ENCODE measurements at regions of chr5 and their contacts with region 1.

Region 1: DNA sequence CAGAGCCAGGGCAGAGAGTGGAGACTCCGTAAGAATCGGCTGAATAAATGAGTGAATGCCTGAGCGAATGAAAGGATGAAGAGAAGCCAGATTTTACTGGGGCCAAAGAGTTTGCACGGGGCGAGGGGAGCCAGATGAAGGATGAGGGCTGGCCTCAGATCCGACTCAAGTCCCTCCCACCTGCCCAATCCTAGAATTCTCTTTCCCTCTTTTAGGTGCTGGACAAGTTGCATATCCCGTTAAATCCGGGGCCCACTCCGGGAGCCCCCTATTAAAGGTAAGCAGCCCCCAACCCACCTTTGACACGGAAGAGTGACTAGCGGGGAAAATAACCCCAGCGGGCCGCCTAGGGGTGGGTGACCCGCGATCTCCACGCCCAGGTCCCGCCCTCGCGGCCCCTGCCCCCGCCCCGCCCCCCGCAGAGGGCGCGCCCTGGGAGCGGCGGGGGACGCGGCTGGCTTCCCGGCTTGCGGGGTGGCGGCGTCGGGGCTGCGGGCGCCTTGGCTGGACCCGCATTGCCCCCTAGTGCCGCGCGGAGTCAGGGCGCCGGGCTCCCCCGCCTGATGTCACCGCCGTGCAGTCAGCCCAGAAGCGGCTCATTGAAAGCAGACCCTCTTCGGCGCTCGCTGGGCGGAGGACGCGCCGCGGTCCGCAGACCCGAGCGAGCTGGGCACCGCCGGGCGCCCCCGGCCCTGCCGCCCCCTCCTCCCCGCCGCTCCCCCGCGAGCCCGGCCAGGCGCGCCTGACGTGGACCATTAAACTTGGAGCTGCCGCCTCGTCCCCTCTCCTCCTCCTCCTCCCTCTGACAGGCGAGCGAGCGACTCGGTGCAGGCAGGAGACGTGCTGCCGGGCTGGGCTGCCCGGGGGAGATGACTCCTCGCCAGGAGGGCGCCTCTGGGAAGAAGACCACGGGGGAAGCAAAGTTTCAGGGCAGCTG is at the start of gene ADRA1B:
- DNase-seq: peak; percentile 37
- H3K4me3 ChIP-seq: peak within 1 kb of the TSS; percentile 24
- H3K27ac ChIP-seq: no peak within 1 kb of the TSS
- H3K4me1 ChIP-seq: no peaks in the 10 kb centered on the region
- H3K27me3 ChIP-seq: peaks cover 81% of the 10 kb centered on the region
- CTCF ChIP-seq: peak; percentile 37
- total RNA-seq, gene ADRA1B: not detected in 2 replicates

Region 2: DNA sequence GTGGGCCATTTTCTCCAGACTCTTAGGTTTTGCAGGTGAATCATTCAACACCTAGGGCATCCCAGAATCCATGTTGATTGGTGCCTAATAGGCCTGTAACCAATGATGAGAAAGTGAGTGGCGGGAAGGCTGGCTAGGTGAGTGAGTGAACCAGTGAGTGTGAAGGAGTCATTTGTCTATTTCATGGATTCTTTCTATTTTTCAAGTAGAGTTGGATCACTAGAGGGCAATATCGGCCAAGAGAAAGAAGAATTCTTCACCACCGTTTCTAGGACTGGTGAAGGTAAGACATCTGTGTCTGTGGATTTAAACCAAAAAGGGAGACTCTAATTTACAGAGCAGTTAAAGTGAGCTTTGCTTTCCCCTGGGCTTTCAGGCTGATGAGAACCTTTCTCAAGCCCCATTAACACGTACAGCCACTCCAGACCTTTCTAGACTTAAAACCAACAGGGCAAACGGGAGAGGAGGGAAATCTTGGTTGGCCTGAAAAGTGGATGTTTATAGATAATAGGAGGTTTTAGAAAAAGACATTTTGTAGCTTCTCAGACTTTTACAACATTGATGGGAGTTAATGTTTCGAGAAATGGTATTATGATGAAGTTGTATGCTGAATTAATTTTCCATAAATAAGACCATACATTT is 471.6 kb before region 1 on chr5:
- CTCF ChIA-PET with region 1: no interaction called
- POLR2A ChIA-PET with region 1: no interaction called
- intact Hi-C with region 1: loop called (anchors 10 kb)
- DNase-seq: peak; percentile 51
- H3K4me3 ChIP-seq: no peak overlapping the region
- H3K27ac ChIP-seq: no peak overlapping the region
- H3K4me1 ChIP-seq: no peaks in the 10 kb centered on the region
- H3K27me3 ChIP-seq: no peaks in the 10 kb centered on the region
- CTCF ChIP-seq: peak; percentile 40; the same call in 1 of the 2 replicates

Region 3: DNA sequence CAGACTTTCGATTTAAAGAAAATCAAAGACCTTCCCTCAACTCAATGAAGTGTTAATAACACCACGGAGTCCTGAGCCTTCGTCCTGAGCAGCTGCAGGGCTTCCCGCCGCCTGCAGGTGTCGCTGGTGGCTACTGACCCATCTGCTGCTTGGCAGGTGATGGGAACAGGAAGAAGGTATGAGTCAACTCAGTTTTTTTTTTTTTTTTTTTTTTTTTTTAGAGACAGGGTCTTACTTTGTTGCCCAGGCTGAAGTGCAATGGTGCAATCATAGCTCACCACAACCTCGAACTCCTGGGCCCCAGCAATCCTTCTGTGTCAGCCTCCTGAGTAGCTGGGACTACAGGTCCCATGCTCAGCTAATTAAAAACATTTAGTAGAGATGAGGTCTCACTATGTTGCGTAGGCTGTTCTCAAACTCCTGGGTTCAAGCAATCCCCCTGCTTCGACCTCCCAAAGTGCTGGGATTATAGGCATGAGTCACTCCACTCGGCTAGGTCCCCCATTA is 400.2 kb before region 1 on chr5:
- CTCF ChIA-PET with region 1: no interaction called
- POLR2A ChIA-PET with region 1: no interaction called
- intact Hi-C with region 1: loop called (anchors 10 kb)
- DNase-seq: peak; percentile 48
- H3K4me3 ChIP-seq: no peak overlapping the region
- H3K27ac ChIP-seq: no peak overlapping the region
- H3K4me1 ChIP-seq: no peaks in the 10 kb centered on the region
- H3K27me3 ChIP-seq: no peaks in the 10 kb centered on the region
- CTCF ChIP-seq: peak; percentile 82

Region 4: GRCh38 chr5:160287378-160288051 is 371.3 kb after region 1 on chr5:
- CTCF ChIA-PET with region 1: no interaction called
- POLR2A ChIA-PET with region 1: no interaction called
- intact Hi-C with region 1: no loop called
- DNase-seq: no peak
- H3K4me3 ChIP-seq: no peak overlapping the region
- H3K27ac ChIP-seq: no peak overlapping the region
- H3K4me1 ChIP-seq: peaks cover 6% of the 10 kb centered on the region
- H3K27me3 ChIP-seq: no peaks in the 10 kb centered on the region
- CTCF ChIP-seq: no peak

Measured in A673 (cell line).